Activated CD4-positive, alpha-beta T cell treated with anti-CD3 and anti-CD28 coated beads, Interleukin-2, amount 10 ng/mL, durations not matched to agents 7 days and 5 days (primary cell): ENCODE measurements at regions of chr3 and their contacts with region 1.

Region 1: GRCh38 chr3:27712136-27713077 is 9.7 kb downstream of the EOMES start:
- DNase-seq: peak; percentile 84
- H3K4me3 Mint-ChIP-seq: peak overlapping the region; percentile 84
- H3K27ac Mint-ChIP-seq: peak overlapping the region; percentile 48
- H3K4me1 Mint-ChIP-seq: peaks cover 29% of the 10 kb centered on the region
- H3K27me3 Mint-ChIP-seq: peaks cover 70% of the 10 kb centered on the region

Region 2: GRCh38 chr3:27431116-27431515 is 281.3 kb before region 1 on chr3:
- CTCF ChIA-PET with region 1: no interaction called
- POLR2A ChIA-PET with region 1: no interaction called
- DNase-seq: no peak
- H3K4me3 Mint-ChIP-seq: no peak overlapping the region
- H3K27ac Mint-ChIP-seq: no peak overlapping the region
- H3K4me1 Mint-ChIP-seq: peaks cover 3% of the 10 kb centered on the region
- H3K27me3 Mint-ChIP-seq: no peaks in the 10 kb centered on the region

Region 3: GRCh38 chr3:27728195-27729087 is 16.0 kb after region 1 on chr3:
- CTCF ChIA-PET with region 1: interaction called, 16 read pairs
- POLR2A ChIA-PET with region 1: no interaction called
- DNase-seq: no peak
- H3K4me3 Mint-ChIP-seq: peak overlapping the region; percentile 22
- H3K27ac Mint-ChIP-seq: peak overlapping the region; percentile 37
- H3K4me1 Mint-ChIP-seq: peaks cover 41% of the 10 kb centered on the region
- H3K27me3 Mint-ChIP-seq: peaks cover 88% of the 10 kb centered on the region

Region 4: DNA sequence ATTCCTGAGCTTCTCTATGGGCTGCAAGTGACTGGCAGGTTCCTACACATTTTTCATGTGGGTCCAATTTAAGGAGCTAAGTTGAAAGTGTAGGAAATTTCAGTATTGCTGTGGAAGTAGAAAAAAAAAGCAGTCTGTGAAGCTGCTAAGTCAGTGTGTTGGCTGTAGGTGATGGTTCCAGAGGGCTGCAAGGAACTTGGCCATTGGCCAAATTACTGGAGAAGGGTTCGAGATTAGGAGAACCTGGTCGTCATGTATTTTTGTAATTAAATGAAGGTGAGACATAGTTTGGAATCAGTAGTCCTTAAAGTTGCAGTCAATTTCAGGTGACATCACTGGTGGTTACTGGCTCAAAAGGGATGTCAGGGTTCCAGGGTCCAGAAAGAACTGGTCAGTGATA is 64.6 kb after region 1 on chr3:
- CTCF ChIA-PET with region 1: no interaction called
- POLR2A ChIA-PET with region 1: no interaction called
- DNase-seq: no peak
- H3K4me3 Mint-ChIP-seq: no peak overlapping the region
- H3K27ac Mint-ChIP-seq: no peak overlapping the region
- H3K4me1 Mint-ChIP-seq: no peaks in the 10 kb centered on the region
- H3K27me3 Mint-ChIP-seq: peaks cover 3% of the 10 kb centered on the region

Region 5: GRCh38 chr3:28286595-28286994 is 574.2 kb after region 1 on chr3:
- CTCF ChIA-PET with region 1: interaction called, 10 read pairs
- POLR2A ChIA-PET with region 1: no interaction called
- DNase-seq: no peak
- H3K4me3 Mint-ChIP-seq: no peak overlapping the region
- H3K27ac Mint-ChIP-seq: no peak overlapping the region
- H3K4me1 Mint-ChIP-seq: peaks cover 1% of the 10 kb centered on the region
- H3K27me3 Mint-ChIP-seq: no peaks in the 10 kb centered on the region

Region 6: GRCh38 chr3:28322464-28322863 is 610.1 kb after region 1 on chr3:
- CTCF ChIA-PET with region 1: interaction called, 36 read pairs
- POLR2A ChIA-PET with region 1: interaction called, 4 read pairs
- DNase-seq: no peak
- H3K4me3 Mint-ChIP-seq: no peak overlapping the region
- H3K27ac Mint-ChIP-seq: no peak overlapping the region
- H3K4me1 Mint-ChIP-seq: peaks cover 28% of the 10 kb centered on the region
- H3K27me3 Mint-ChIP-seq: no peaks in the 10 kb centered on the region

Region 7: GRCh38 chr3:28328188-28329151 is 616.1 kb after region 1 on chr3:
- CTCF ChIA-PET with region 1: interaction called, 36 read pairs
- POLR2A ChIA-PET with region 1: no interaction called
- DNase-seq: no peak
- H3K4me3 Mint-ChIP-seq: no peak overlapping the region
- H3K27ac Mint-ChIP-seq: no peak overlapping the region
- H3K4me1 Mint-ChIP-seq: peaks cover 25% of the 10 kb centered on the region
- H3K27me3 Mint-ChIP-seq: no peaks in the 10 kb centered on the region

Region 8: GRCh38 chr3:28348629-28349483 is 636.4 kb after region 1 on chr3 and contains the starts of genes AZI2 and ZCWPW2:
- CTCF ChIA-PET with region 1: interaction called, 12 read pairs
- POLR2A ChIA-PET with region 1: no interaction called
- DNase-seq: peak; percentile 93
- H3K4me3 Mint-ChIP-seq: peak within 1 kb of the TSS; percentile 93
- H3K27ac Mint-ChIP-seq: peak within 1 kb of the TSS; percentile 99
- H3K4me1 Mint-ChIP-seq: peaks cover 54% of the 10 kb centered on the region
- H3K27me3 Mint-ChIP-seq: no peaks in the 10 kb centered on the region
- total RNA-seq, gene AZI2: 53.5 to 68.8 TPM
- total RNA-seq, gene ZCWPW2: 0.37 to 0.50 TPM